Heart right ventricle (tissue), 16 donors: ENCODE measurements at regions of chr17 and their contacts with region 1.

Region 1: DNA sequence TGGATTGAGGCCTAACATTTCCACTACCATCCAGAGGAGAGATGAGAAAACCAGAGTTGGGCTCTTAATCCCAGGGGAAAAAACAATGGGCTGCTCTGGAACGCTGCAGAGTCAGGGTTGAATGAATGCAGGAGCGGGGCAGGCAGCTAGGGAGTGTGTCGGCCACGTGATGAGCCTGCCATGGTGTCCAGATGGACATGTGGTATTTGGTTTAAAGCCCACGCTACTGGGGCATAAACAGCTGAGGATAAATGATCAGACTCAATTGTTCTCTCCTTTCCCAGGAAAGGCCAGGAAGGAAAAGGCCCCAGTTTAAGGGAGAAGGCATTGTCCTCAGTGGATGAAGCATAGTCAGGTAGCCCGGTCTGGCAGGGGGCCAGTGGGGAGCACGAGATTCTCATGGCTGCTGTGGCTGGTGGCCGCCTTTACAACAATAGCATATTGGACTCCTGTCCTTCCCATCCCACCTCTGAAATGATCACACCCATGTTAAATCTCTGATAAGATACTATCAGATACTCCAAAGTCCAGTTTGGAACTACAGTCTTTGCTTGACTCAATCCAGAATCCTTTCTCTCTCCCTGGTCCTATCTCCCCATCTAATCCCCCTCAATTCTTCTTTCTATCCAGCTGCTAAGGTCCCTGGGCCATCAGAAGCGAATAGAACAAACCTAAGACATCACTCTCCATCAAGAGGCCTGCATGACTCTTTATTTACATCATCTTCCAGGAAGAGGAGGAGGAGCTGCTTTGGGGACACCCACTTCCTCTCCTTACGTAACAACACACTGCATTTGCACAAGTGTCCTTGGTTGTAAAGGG is 20.4 kb downstream of the CA4 start:
- DNase-seq: peak; percentile 73 to 74
- ATAC-seq: peak; percentile 58 to 88 (median 78)
- H3K4me3 ChIP-seq: no peak overlapping the region
- H3K27ac ChIP-seq: peak overlapping the region in 9 of 10 donors; percentile 28 to 84 (median 63)
- H3K4me1 ChIP-seq: peaks cover 0 to 72% (median 41%) of the 10 kb centered on the region in 9 donors
- H3K27me3 ChIP-seq: peaks cover 0 to 6% (median 0%) of the 10 kb centered on the region in 7 donors
- CTCF ChIP-seq: no peak

Region 2: GRCh38 chr17:60102632-60103096 is 67.5 kb before region 1 on chr17:
- intact Hi-C with region 1: no loop called
- DNase-seq: peak in 1 of 2 donors; percentile 29
- ATAC-seq: peak in 6 of 8 donors; percentile 52 to 81 (median 70)
- H3K4me3 ChIP-seq: peak overlapping the region in 9 of 10 donors; percentile 16 to 45 (median 34)
- H3K27ac ChIP-seq: peak overlapping the region in 4 of 10 donors; percentile 45 to 60 (median 53)
- H3K4me1 ChIP-seq: peaks cover 0 to 17% (median 0%) of the 10 kb centered on the region in 9 donors
- H3K27me3 ChIP-seq: no peaks in the 10 kb centered on the region
- CTCF ChIP-seq: no peak

Region 3: DNA sequence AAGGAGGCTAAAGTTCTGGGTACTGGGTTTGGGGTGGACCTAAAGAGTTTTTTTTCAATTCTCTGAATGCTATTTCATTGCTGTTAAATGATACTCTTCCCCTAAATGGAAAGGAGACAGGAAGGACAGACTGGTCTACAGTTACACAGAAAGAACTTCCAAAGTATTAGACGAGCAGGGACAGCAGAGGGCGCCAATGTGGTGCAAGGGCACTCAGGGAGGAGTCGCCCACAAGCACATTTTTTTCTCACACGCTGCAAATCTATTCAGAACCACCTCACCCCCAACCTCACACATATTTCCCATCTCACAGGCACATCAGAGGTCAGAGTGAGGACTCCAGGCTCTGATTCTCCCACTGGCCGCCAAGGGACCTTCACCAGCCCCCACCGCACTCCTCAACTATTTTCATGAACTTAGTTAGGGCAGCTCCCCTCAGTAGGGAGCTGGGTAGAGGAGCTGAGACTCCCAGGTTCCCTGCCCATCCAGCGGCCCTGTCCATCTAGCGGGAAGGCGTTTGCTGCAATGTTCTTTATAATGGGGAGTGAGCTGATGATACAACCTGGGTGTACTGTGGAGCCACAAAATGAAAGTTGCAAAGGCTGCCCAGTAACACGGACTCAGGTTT is 27.1 kb before region 1 on chr17:
- intact Hi-C with region 1: loop called in 1 of 10 experiments (anchors 1 kb)
- DNase-seq: peak; percentile 82 to 89
- ATAC-seq: peak; percentile 59 to 91 (median 80)
- H3K4me3 ChIP-seq: peak overlapping the region in 5 of 10 donors; percentile 0 to 23 (median 14)
- H3K27ac ChIP-seq: peak overlapping the region in 8 of 10 donors; percentile 24 to 63 (median 42)
- H3K4me1 ChIP-seq: peaks cover 0 to 73% (median 49%) of the 10 kb centered on the region in 9 donors
- H3K27me3 ChIP-seq: peaks cover 30 to 86% (median 74%) of the 10 kb centered on the region in 7 donors
- CTCF ChIP-seq: peak; percentile 55 to 87 (median 77)

Region 4: GRCh38 chr17:60240290-60240689 is 70.2 kb after region 1 on chr17:
- intact Hi-C with region 1: no loop called
- DNase-seq: no peak
- ATAC-seq: no peak
- H3K4me3 ChIP-seq: no peak overlapping the region
- H3K27ac ChIP-seq: no peak overlapping the region
- H3K4me1 ChIP-seq: no peaks in the 10 kb centered on the region
- H3K27me3 ChIP-seq: no peaks in the 10 kb centered on the region
- CTCF ChIP-seq: no peak

Region 5: GRCh38 chr17:60315650-60316049 is 145.5 kb after region 1 on chr17:
- intact Hi-C with region 1: no loop called
- DNase-seq: no peak
- ATAC-seq: no peak
- H3K4me3 ChIP-seq: no peak overlapping the region
- H3K27ac ChIP-seq: no peak overlapping the region
- H3K4me1 ChIP-seq: peaks cover 0 to 17% (median 0%) of the 10 kb centered on the region in 9 donors
- H3K27me3 ChIP-seq: no peaks in the 10 kb centered on the region
- CTCF ChIP-seq: no peak